Activated CD4-positive, alpha-beta T cell treated with anti-CD3 and anti-CD28 coated beads for 36 hours (primary cell): ENCODE measurements at regions of chr6 and their contacts with region 1.

Region 1: GRCh38 chr6:42771741-42772100 is 10.1 kb upstream of the BICRAL start:
- DNase-seq: no peak
- ATAC-seq: no peak
- H3K4me3 Mint-ChIP-seq: peak overlapping the region; percentile 70
- H3K27ac Mint-ChIP-seq: peak overlapping the region; percentile 99
- H3K4me1 Mint-ChIP-seq: peaks cover 58% of the 10 kb centered on the region
- H3K27me3 Mint-ChIP-seq: no peaks in the 10 kb centered on the region

Region 2: DNA sequence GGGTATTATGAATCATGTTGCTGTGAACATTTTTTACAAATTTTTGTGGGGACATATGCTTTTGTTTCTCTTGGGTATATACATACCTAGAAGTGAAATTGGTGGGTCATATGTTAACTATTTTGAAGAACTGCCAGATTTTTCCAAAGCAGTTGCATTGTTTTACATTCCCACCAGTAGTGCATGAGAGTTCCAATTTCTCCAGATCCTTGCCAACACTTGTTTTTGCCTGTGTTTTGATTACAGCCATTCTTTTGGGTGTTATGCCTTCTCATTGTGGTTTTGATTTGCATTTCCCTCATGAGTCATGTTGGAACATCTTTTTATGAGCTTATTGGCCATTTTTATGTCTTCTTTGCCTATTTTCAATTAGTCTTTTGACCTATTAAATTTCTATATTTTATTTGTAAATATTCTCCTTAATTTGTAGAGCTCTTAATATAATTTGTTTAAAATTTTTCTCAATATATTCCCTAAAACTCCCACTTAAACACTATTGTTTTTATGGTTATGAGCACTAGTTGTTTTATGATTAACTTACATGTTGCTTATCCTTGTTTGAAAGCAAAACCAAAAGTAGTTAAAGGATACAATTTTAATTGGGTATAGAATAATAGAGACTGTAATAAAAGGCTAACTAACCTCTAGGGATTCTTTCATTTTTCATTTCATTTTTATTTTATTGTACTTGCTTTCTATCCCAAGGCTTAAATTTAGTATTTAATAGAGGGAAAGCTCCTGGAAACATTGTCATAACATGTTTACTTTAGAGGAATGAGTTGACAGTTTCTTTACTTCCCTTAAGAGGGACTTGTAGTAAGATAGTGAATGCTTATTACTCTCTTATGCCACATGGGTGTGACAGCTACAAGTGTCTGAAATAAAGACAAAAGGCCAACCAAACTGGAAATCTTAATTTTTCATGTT is 202.4 kb before region 1 on chr6:
- CTCF ChIA-PET with region 1: no interaction called
- POLR2A ChIA-PET with region 1: no interaction called
- intact Hi-C with region 1: loop called in 1 of 2 experiments (anchors 5 kb)
- DNase-seq: no peak
- ATAC-seq: peak; percentile 66
- H3K4me3 Mint-ChIP-seq: no peak overlapping the region
- H3K27ac Mint-ChIP-seq: peak overlapping the region; percentile 79
- H3K4me1 Mint-ChIP-seq: peaks cover 57% of the 10 kb centered on the region
- H3K27me3 Mint-ChIP-seq: no peaks in the 10 kb centered on the region

Region 3: DNA sequence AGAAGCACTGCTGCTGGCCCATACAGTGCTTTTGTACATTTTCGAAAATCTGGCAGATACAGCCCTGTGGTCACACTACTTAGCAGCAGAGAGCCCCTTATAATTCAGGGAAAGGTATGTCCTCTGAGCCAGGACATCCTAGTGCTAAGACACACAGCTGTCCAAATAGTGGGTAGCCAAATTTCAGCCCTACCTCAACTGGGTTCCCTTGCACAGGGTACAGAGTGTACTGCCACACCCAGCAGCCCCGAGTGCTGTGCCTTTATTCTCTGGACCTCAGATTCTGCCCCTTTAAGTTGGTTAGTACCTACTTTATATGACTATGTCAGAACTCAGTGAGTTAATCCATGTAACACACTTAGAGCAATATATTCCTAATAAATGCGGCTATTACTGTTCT is 96.9 kb before region 1 on chr6:
- CTCF ChIA-PET with region 1: no interaction called
- POLR2A ChIA-PET with region 1: no interaction called
- intact Hi-C with region 1: no loop called
- DNase-seq: no peak
- ATAC-seq: no peak
- H3K4me3 Mint-ChIP-seq: no peak overlapping the region
- H3K27ac Mint-ChIP-seq: no peak overlapping the region
- H3K4me1 Mint-ChIP-seq: peaks cover 11% of the 10 kb centered on the region
- H3K27me3 Mint-ChIP-seq: no peaks in the 10 kb centered on the region

Region 4: DNA sequence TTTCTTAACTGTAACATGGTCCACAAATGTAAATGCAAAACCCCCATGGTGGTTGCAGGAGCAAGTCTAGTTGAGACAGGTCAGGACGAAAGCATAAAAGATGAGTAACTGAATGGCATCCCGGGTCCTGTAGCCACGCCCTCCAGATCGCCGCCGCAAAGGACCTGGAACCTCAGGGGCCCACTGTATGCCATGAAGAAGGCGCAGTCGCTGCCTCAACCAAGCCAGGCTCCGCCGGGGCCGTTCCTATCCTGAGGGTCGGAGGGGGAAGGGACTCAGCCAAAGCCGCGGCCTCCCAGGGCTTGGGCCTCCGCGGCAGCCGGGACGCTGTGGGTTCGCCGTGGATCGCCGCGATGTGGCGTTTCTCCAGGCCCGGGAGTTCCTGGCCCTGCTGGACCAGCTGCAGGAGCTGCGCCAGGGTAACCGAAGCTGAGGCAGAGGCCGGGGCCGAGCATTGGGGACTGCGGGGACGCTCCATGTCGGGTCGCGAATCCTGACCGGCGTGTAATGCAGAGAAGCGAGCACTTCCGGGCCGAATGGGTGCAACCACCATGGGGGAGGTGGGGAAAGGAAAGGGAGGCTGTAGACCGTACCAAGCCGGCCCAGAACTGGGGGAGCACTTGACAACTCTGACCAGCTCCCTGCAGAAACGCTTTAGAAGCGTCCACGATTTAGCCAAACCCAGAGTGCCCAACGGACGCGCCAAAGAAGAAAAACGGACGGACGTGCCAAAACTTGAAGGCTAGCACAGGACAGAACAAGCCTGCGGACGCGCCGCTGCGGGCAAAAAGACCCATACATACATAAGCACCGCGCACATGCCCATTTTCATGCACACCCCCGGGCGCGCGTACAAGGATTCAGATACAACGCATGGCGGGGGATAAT is 118.8 kb after region 1 on chr6:
- CTCF ChIA-PET with region 1: no interaction called
- POLR2A ChIA-PET with region 1: no interaction called
- intact Hi-C with region 1: loop called in 1 of 2 experiments (anchors 1 kb)
- DNase-seq: peak; percentile 95
- ATAC-seq: peak; percentile 89
- H3K4me3 Mint-ChIP-seq: peak overlapping the region; percentile 90
- H3K27ac Mint-ChIP-seq: peak overlapping the region; percentile 98
- H3K4me1 Mint-ChIP-seq: peaks cover 31% of the 10 kb centered on the region
- H3K27me3 Mint-ChIP-seq: no peaks in the 10 kb centered on the region

Region 5: DNA sequence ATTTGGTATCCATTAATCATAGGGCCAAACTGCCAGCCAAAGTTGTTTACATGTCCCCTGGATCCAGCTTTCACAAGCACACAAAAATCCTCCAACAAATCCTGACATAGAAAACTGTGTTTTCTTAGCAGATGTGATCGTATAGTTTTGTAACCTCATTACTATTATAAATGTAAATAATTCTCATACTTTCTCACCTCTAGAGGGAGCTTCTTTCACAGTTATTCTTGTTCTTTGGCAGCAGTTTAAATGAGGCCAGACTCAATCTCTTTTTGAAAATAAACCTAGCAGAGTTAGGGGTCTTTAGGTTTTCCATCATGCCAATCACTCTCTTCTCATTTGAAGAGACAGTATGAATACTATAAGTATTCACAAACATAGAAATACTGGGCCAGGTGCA is 614.8 kb after region 1 on chr6:
- CTCF ChIA-PET with region 1: no interaction called
- POLR2A ChIA-PET with region 1: no interaction called
- intact Hi-C with region 1: loop called in 1 of 2 experiments (anchors 5 kb)
- DNase-seq: no peak
- ATAC-seq: no peak
- H3K4me3 Mint-ChIP-seq: no peak overlapping the region
- H3K27ac Mint-ChIP-seq: peak overlapping the region; percentile 6
- H3K4me1 Mint-ChIP-seq: peaks cover 59% of the 10 kb centered on the region
- H3K27me3 Mint-ChIP-seq: peaks cover 2% of the 10 kb centered on the region